Caco-2 (cell line): ENCODE measurements at regions of chr16 and their contacts with region 1.

Region 1: DNA sequence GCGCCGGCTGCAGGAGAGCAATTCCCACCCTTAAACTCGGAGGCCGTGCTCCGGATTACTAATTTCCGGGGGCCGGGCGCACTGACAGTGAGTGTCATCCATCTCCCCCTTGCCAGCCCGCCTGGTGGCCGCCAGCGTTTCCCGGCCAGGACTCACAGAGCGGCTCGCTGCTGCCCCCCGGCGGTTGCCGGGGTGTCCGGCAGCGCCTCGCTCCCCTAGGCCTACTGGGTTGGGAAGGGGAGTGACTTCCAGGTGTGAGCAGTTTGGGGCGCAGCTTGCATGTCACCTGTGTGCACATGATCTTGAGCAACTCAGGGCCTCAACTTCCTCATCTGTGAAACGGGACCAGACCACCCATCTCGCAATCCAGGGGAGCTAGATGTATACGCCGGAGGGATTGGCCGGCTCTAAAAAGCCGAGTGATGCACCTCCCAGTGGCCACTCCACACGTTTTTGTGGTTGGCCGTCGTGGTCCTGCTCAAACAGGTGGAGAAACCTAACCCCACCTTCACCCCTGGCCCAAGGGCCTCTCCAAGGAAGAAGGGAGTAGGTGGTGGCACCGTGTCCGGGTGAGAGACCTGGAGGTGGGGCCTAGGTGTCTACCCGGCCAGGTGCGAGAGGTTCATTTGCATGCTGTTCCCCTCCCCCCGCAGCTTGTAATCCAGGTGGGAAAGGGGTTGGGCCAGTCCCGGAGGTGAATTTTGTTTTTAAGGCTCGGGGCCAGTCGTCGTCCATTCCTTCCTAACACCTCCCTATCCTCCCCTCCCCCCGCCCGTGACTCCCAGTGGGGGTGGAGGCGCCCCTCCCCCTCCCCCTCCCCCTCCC is 2.4 kb upstream of the GSE1 start:
- DNase-seq: peak; percentile 96 to 97
- H3K4me3 ChIP-seq: peak overlapping the region; percentile 95
- H3K4me3 Mint-ChIP-seq: peak overlapping the region; percentile 81
- H3K27ac Mint-ChIP-seq: peak overlapping the region; percentile 91
- H3K4me1 ChIP-seq: peaks cover 37% of the 10 kb centered on the region
- H3K4me1 Mint-ChIP-seq: peaks cover 25% of the 10 kb centered on the region
- H3K27me3 ChIP-seq: no peaks in the 10 kb centered on the region
- H3K27me3 Mint-ChIP-seq: no peaks in the 10 kb centered on the region
- CTCF ChIP-seq: peak; percentile 99

Region 2: GRCh38 chr16:85275533-85276249 is 335.0 kb before region 1 on chr16:
- CTCF ChIA-PET with region 1: no interaction called
- POLR2A ChIA-PET with region 1: no interaction called
- intact Hi-C with region 1: loop called (anchors 5 kb)
- DNase-seq: peak; percentile 69 to 88
- H3K4me3 ChIP-seq: no peak overlapping the region
- H3K4me3 Mint-ChIP-seq: no peak overlapping the region
- H3K27ac Mint-ChIP-seq: no peak overlapping the region
- H3K4me1 ChIP-seq: no peaks in the 10 kb centered on the region
- H3K4me1 Mint-ChIP-seq: no peaks in the 10 kb centered on the region
- H3K27me3 ChIP-seq: no peaks in the 10 kb centered on the region
- H3K27me3 Mint-ChIP-seq: no peaks in the 10 kb centered on the region
- CTCF ChIP-seq: peak; percentile 97 to 98

Region 3: GRCh38 chr16:85369741-85370528 is 240.8 kb before region 1 on chr16:
- CTCF ChIA-PET with region 1: interaction called, 8 read pairs
- POLR2A ChIA-PET with region 1: no interaction called
- intact Hi-C with region 1: loop called (anchors 2 kb)
- DNase-seq: peak; percentile 66 to 83
- H3K4me3 ChIP-seq: no peak overlapping the region
- H3K4me3 Mint-ChIP-seq: no peak overlapping the region
- H3K27ac Mint-ChIP-seq: no peak overlapping the region
- H3K4me1 ChIP-seq: peaks cover 13% of the 10 kb centered on the region
- H3K4me1 Mint-ChIP-seq: no peaks in the 10 kb centered on the region
- H3K27me3 ChIP-seq: no peaks in the 10 kb centered on the region
- H3K27me3 Mint-ChIP-seq: no peaks in the 10 kb centered on the region
- CTCF ChIP-seq: peak; percentile 91

Region 4: DNA sequence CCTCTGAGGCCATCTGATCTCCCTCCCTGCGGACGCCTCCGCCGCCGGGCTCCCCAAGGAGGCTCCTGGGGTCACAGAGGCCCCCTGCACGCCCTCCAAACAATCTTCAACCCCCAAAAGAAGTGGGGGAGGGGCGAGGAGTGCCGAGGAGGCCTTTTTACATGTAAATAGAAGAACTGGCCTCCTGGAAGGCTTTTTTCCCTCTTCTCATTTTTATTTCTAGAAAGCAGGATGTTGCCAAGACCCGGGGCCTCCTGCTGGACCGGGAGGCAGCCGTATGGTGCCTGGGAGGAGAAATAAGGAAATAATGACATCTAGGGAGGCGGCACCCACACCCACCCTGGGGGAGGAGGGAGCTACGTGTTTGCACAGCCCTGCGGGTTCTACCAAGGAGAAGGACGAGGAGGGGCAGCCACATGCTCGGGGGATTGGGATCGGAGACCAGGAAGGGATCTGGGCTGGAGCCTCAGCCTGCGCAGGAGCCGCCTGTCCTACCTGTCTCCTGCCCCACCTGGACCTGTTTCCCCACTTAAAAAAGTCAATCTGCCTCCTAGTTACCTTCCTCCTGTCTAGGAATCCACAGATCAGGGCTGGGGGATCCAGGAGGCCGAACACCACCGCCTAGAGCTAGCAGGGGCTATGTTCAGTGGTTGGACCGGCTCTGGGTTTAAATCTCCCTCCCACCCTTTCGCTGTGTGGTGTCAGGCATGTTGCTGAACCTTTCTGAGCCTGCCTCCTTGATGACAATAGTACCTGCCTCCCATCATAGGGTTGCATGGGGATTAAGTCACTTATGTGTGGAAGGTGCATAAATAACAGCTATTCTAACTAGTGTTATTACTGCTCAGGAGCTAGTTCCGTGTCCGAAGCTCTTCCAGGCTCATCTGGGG is 173.3 kb before region 1 on chr16:
- CTCF ChIA-PET with region 1: interaction called, 7 read pairs
- POLR2A ChIA-PET with region 1: interaction called, 8 read pairs
- intact Hi-C with region 1: loop called (anchors 5 kb)
- DNase-seq: peak; percentile 89 to 93
- H3K4me3 ChIP-seq: peak overlapping the region; percentile 29
- H3K4me3 Mint-ChIP-seq: peak overlapping the region; percentile 76
- H3K27ac Mint-ChIP-seq: peak overlapping the region; percentile 92
- H3K4me1 ChIP-seq: peaks cover 43% of the 10 kb centered on the region
- H3K4me1 Mint-ChIP-seq: peaks cover 17% of the 10 kb centered on the region
- H3K27me3 ChIP-seq: no peaks in the 10 kb centered on the region
- H3K27me3 Mint-ChIP-seq: no peaks in the 10 kb centered on the region
- CTCF ChIP-seq: no peak

Region 5: GRCh38 chr16:85536073-85536410 is 74.7 kb before region 1 on chr16:
- CTCF ChIA-PET with region 1: interaction called, 9 read pairs
- POLR2A ChIA-PET with region 1: interaction called, 13 read pairs
- intact Hi-C with region 1: no loop called
- DNase-seq: no peak
- H3K4me3 ChIP-seq: no peak overlapping the region
- H3K4me3 Mint-ChIP-seq: peak overlapping the region; percentile 58
- H3K27ac Mint-ChIP-seq: peak overlapping the region; percentile 97
- H3K4me1 ChIP-seq: peaks cover 40% of the 10 kb centered on the region
- H3K4me1 Mint-ChIP-seq: peaks cover 34% of the 10 kb centered on the region
- H3K27me3 ChIP-seq: no peaks in the 10 kb centered on the region
- H3K27me3 Mint-ChIP-seq: no peaks in the 10 kb centered on the region
- CTCF ChIP-seq: no peak